Esophagus squamous epithelium (tissue), 5 donors: ENCODE measurements at regions of chr2 and their contacts with region 1.

Region 1: GRCh38 chr2:69724540-69725159 is 17.3 kb upstream of the ANXA4 start:
- DNase-seq: peak; percentile 5
- H3K4me3 ChIP-seq: peak overlapping the region in 3 of 4 donors; percentile 10 to 51 (median 31)
- H3K27ac ChIP-seq: no peak overlapping the region
- H3K4me1 ChIP-seq: peaks cover 0 to 7% (median 4%) of the 10 kb centered on the region in 3 donors
- H3K27me3 ChIP-seq: no peaks in the 10 kb centered on the region
- CTCF ChIP-seq: peak; percentile 91 to 98 (median 96)
- POLR2A ChIP-seq: no peak

Region 2: DNA sequence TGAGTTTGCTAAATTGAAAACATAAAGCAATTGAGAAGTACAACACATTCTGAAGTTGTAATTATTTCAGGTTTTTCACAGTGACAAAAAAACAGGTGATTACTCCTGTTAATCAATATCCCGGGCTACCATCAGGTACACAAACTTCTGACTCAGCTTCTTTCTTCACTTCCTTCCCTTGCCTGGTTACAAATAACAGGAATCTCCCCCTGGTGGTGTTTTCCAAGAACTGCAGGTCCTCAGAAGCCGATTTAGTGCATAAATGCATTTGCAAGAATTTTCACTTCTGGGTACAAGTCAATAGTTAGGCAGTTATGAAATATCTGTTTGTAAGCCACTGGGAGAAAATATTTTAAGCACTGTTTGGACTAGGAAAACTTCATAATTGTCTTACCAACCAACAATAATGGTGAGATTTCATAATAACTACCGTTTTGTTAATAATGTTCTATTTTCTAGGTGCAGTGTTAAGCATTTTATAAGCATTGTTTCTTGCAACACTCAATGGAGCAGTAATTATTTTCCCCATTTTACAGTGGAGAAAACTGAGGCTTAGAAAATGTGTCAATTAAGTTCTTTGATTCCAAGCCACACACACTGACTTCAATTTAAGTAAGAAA is 92.4 kb after region 1 on chr2:
- intact Hi-C with region 1: loop called (anchors 2 kb)
- DNase-seq: peak; percentile 26
- H3K4me3 ChIP-seq: no peak overlapping the region
- H3K27ac ChIP-seq: peak overlapping the region in 2 of 4 donors; percentile 11 to 36
- H3K4me1 ChIP-seq: peaks cover 0 to 16% (median 0%) of the 10 kb centered on the region in 3 donors
- H3K27me3 ChIP-seq: no peaks in the 10 kb centered on the region
- CTCF ChIP-seq: peak; percentile 84 to 99 (median 97)
- POLR2A ChIP-seq: no peak